ENCODE measurements at regions of chr11 and their contacts with region 1.

Region 1: DNA sequence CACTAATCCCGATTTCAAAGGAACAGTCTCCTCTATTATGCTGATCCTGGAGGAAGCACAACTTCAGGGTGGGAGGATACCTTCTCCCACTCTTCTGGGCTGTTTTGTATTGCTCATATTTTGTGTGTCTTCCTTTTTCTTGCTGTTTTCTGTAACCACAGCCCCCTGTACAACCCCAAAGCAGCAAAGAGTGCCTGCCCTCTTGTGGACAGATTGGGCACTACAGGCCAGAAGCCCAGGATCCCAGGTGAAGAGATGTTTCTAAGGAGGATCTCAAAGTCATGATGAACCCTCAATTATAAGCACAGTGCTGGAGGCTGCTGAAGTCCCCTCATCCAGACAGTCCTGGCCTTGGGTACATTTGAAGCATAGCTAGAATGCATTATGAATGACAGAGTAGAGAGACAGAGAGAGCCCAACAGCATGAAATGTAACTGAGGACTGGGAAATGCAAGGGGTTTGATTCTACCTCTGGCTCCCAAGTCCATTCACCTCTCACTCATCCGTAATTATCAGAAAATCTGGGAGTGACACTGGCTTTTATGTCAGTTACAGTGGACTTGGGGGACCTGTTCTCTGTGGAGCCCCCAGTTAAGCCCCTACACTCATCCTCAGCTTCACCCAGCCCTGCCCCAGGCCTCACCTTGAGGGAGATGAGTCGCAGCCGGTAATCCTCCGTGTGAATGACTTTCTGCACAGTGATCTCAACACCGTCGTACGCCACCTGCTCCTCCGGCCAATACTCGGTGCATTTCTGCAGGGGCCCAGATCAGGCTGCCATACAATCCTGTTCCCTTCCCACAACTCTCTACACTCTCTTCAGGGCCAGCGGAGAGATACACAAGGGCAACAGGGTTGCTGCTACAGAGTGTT is 6.2 kb upstream of the IGSF22 start:
- DNase-seq: peak; percentile 76
- H3K4me3 Mint-ChIP-seq: no peak overlapping the region
- H3K27ac Mint-ChIP-seq: peak overlapping the region; percentile 15
- H3K4me1 Mint-ChIP-seq: peaks cover 3% of the 10 kb centered on the region
- H3K27me3 Mint-ChIP-seq: no peaks in the 10 kb centered on the region

Region 2: GRCh38 chr11:18115360-18116127 is 616.6 kb before region 1 on chr11:
- CTCF ChIA-PET with region 1: interaction called, 12 read pairs
- POLR2A ChIA-PET with region 1: no interaction called
- intact Hi-C with region 1: loop called (anchors 2 kb)
- DNase-seq: peak; percentile 70
- H3K4me3 Mint-ChIP-seq: no peak overlapping the region
- H3K27ac Mint-ChIP-seq: no peak overlapping the region
- H3K4me1 Mint-ChIP-seq: no peaks in the 10 kb centered on the region
- H3K27me3 Mint-ChIP-seq: peaks cover 10% of the 10 kb centered on the region

Region 3: DNA sequence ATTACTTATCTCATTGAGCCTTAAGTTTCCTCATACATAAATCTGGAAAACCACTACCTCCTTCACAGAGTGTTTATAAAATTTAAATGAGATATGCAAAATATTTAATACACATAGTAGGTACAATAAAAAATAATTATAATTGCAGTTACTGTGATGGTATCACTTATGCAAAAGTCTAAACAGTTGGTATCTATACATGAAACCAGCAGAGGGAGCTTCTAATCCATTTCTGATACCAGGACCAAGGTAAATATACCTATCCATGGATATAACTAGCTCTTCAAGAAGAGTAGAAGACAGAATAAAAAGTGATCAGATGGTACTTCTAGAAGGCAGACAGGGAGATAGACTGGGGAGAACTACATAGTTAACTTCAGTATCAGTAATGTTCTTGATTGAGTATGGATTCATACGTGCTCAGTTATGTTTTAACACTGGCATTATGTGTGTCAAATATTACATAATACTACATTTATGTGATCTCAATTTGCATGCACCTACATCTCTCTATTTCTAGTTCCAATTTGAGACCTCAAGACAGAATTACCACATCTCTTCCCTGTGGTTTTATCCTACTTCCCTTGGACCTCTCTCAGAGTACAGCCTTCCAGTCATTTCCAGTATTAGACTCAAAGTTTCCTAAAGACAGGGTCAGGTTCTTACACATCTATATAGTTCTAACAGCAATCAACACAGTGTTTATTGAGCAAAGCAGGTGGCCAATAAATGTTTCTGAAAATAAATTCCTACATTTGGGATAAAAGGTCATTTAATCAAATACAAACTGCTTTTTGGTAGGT is 191.8 kb before region 1 on chr11:
- CTCF ChIA-PET with region 1: interaction called, 38 read pairs
- POLR2A ChIA-PET with region 1: no interaction called
- intact Hi-C with region 1: no loop called
- DNase-seq: no peak
- H3K4me3 Mint-ChIP-seq: no peak overlapping the region
- H3K27ac Mint-ChIP-seq: no peak overlapping the region
- H3K4me1 Mint-ChIP-seq: peaks cover 5% of the 10 kb centered on the region
- H3K27me3 Mint-ChIP-seq: no peaks in the 10 kb centered on the region

Region 4: GRCh38 chr11:18669220-18669598 is 63.0 kb before region 1 on chr11:
- CTCF ChIA-PET with region 1: no interaction called
- POLR2A ChIA-PET with region 1: no interaction called
- intact Hi-C with region 1: no loop called
- DNase-seq: peak; percentile 51
- H3K4me3 Mint-ChIP-seq: peak overlapping the region; percentile 9
- H3K27ac Mint-ChIP-seq: peak overlapping the region; percentile 46
- H3K4me1 Mint-ChIP-seq: peaks cover 54% of the 10 kb centered on the region
- H3K27me3 Mint-ChIP-seq: no peaks in the 10 kb centered on the region

Region 5: GRCh38 chr11:18721561-18722292 is 10.5 kb before region 1 on chr11:
- CTCF ChIA-PET with region 1: interaction called, 42 read pairs
- POLR2A ChIA-PET with region 1: no interaction called
- intact Hi-C with region 1: no loop called
- DNase-seq: peak; percentile 60
- H3K4me3 Mint-ChIP-seq: peak overlapping the region; percentile 81
- H3K27ac Mint-ChIP-seq: no peak overlapping the region
- H3K4me1 Mint-ChIP-seq: peaks cover 6% of the 10 kb centered on the region
- H3K27me3 Mint-ChIP-seq: no peaks in the 10 kb centered on the region

Region 6: GRCh38 chr11:18768472-18768901 is 36.3 kb after region 1 on chr11:
- CTCF ChIA-PET with region 1: interaction called, 62 read pairs
- POLR2A ChIA-PET with region 1: no interaction called
- intact Hi-C with region 1: loop called (anchors 1 kb)
- DNase-seq: peak; percentile 42
- H3K4me3 Mint-ChIP-seq: no peak overlapping the region
- H3K27ac Mint-ChIP-seq: peak overlapping the region; percentile 9
- H3K4me1 Mint-ChIP-seq: peaks cover 20% of the 10 kb centered on the region
- H3K27me3 Mint-ChIP-seq: peaks cover 12% of the 10 kb centered on the region

Measured in activated CD4-positive, alpha-beta memory T cell treated with anti-CD3 and anti-CD28 coated beads for 36 hours (primary cell).